CD4-positive, alpha-beta memory T cell (primary cell): ENCODE measurements at regions of chr13 and their contacts with region 1.

Region 1: GRCh38 chr13:39037880-39038568 is at the starts of genes NHLRC3 and PROSER1:
- DNase-seq: peak; percentile 84 to 88 (median 85)
- H3K4me3 ChIP-seq: peak within 1 kb of the TSS; percentile 72 to 99
- H3K4me3 Mint-ChIP-seq: peak within 1 kb of the TSS; percentile 88 to 100 (median 95)
- H3K27ac ChIP-seq: peak within 1 kb of the TSS; percentile 73
- H3K27ac Mint-ChIP-seq: peak within 1 kb of the TSS; percentile 90 to 99 (median 95)
- H3K4me1 ChIP-seq: peaks cover 62% of the 10 kb centered on the region
- H3K4me1 Mint-ChIP-seq: peaks cover 35 to 72% (median 58%) of the 10 kb centered on the region in 4 donors
- H3K27me3 ChIP-seq: no peaks in the 10 kb centered on the region
- H3K27me3 Mint-ChIP-seq: no peaks in the 10 kb centered on the region
- total RNA-seq, gene NHLRC3: 26.5 to 27.3 TPM
- total RNA-seq, gene PROSER1: 48.1 to 49.5 TPM

Region 2: GRCh38 chr13:37058910-37059847 is 1978.8 kb before region 1 on chr13 and contains the start of gene SUPT20H:
- CTCF ChIA-PET with region 1: no interaction called
- POLR2A ChIA-PET with region 1: no interaction called
- intact Hi-C with region 1: loop called (anchors 1 kb)
- DNase-seq: peak; percentile 89 to 92 (median 90)
- H3K4me3 ChIP-seq: peak within 1 kb of the TSS; percentile 72 to 77
- H3K4me3 Mint-ChIP-seq: peak within 1 kb of the TSS; percentile 91 to 97 (median 96)
- H3K27ac ChIP-seq: peak within 1 kb of the TSS; percentile 95
- H3K27ac Mint-ChIP-seq: peak within 1 kb of the TSS; percentile 98 to 99 (median 99)
- H3K4me1 ChIP-seq: peaks cover 23% of the 10 kb centered on the region
- H3K4me1 Mint-ChIP-seq: peaks cover 14 to 56% (median 29%) of the 10 kb centered on the region in 4 donors
- H3K27me3 ChIP-seq: no peaks in the 10 kb centered on the region
- H3K27me3 Mint-ChIP-seq: no peaks in the 10 kb centered on the region
- total RNA-seq, gene SUPT20H: 104 to 105 TPM

Region 3: GRCh38 chr13:38349390-38350113 is 688.5 kb before region 1 on chr13 and contains the start of gene UFM1:
- CTCF ChIA-PET with region 1: no interaction called
- POLR2A ChIA-PET with region 1: interaction called, 10 read pairs
- intact Hi-C with region 1: loop called (anchors 1 kb)
- DNase-seq: peak; percentile 90 to 94 (median 92)
- H3K4me3 ChIP-seq: peak within 1 kb of the TSS; percentile 75 to 87
- H3K4me3 Mint-ChIP-seq: peak within 1 kb of the TSS; percentile 95 to 99 (median 98)
- H3K27ac ChIP-seq: peak within 1 kb of the TSS; percentile 90
- H3K27ac Mint-ChIP-seq: peak within 1 kb of the TSS; percentile 97 to 99 (median 98)
- H3K4me1 ChIP-seq: peaks cover 31% of the 10 kb centered on the region
- H3K4me1 Mint-ChIP-seq: peaks cover 26 to 42% (median 35%) of the 10 kb centered on the region in 4 donors
- H3K27me3 ChIP-seq: no peaks in the 10 kb centered on the region
- H3K27me3 Mint-ChIP-seq: peaks cover 0 to 2% of the 10 kb centered on the region in 2 donors
- total RNA-seq, gene UFM1: 81.8 to 82.1 TPM

Region 4: GRCh38 chr13:39023790-39024189 is 14.2 kb before region 1 on chr13:
- CTCF ChIA-PET with region 1: interaction called, 3 read pairs
- POLR2A ChIA-PET with region 1: interaction called, 17 read pairs
- intact Hi-C with region 1: no loop called
- DNase-seq: no peak
- H3K4me3 ChIP-seq: no peak overlapping the region
- H3K4me3 Mint-ChIP-seq: no peak overlapping the region
- H3K27ac ChIP-seq: no peak overlapping the region
- H3K27ac Mint-ChIP-seq: no peak overlapping the region
- H3K4me1 ChIP-seq: no peaks in the 10 kb centered on the region
- H3K4me1 Mint-ChIP-seq: peaks cover 0 to 6% (median 2%) of the 10 kb centered on the region in 4 donors
- H3K27me3 ChIP-seq: no peaks in the 10 kb centered on the region
- H3K27me3 Mint-ChIP-seq: no peaks in the 10 kb centered on the region

Region 5: DNA sequence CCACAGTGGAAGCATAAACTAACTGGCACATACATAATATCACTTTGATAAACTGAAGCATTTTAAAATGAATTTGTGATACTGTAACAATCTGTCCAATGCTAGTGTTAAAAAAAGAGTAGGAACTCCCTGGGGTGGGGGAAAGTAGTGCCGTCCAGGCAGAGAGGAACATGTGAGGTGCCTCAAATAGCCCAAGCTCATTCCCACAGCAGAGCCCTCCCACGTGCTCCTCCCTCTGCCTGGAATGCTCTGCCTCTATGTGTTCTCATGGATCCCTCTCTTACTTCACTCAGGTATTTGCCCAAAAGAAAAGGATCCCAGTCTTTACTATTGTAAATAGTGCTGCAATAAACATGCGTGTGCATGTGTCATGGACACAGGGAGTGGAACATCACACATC is 188.3 kb after region 1 on chr13:
- CTCF ChIA-PET with region 1: no interaction called
- POLR2A ChIA-PET with region 1: no interaction called
- intact Hi-C with region 1: no loop called
- DNase-seq: no peak
- H3K4me3 ChIP-seq: no peak overlapping the region
- H3K4me3 Mint-ChIP-seq: no peak overlapping the region
- H3K27ac ChIP-seq: no peak overlapping the region
- H3K27ac Mint-ChIP-seq: no peak overlapping the region
- H3K4me1 ChIP-seq: no peaks in the 10 kb centered on the region
- H3K4me1 Mint-ChIP-seq: no peaks in the 10 kb centered on the region
- H3K27me3 ChIP-seq: no peaks in the 10 kb centered on the region
- H3K27me3 Mint-ChIP-seq: peaks cover 3% of the 10 kb centered on the region in 2 donors

Region 6: GRCh38 chr13:39655569-39656324 is 617.7 kb after region 1 on chr13 and contains the start of gene COG6:
- CTCF ChIA-PET with region 1: no interaction called
- POLR2A ChIA-PET with region 1: interaction called, 3 read pairs
- intact Hi-C with region 1: loop called (anchors 1 kb)
- DNase-seq: peak; percentile 89 to 95 (median 91)
- H3K4me3 ChIP-seq: peak within 1 kb of the TSS; percentile 77 to 94
- H3K4me3 Mint-ChIP-seq: peak within 1 kb of the TSS; percentile 92 to 99 (median 98)
- H3K27ac ChIP-seq: peak within 1 kb of the TSS; percentile 67
- H3K27ac Mint-ChIP-seq: peak within 1 kb of the TSS; percentile 82 to 98 (median 94)
- H3K4me1 ChIP-seq: peaks cover 17% of the 10 kb centered on the region
- H3K4me1 Mint-ChIP-seq: peaks cover 23 to 45% (median 35%) of the 10 kb centered on the region in 4 donors
- H3K27me3 ChIP-seq: no peaks in the 10 kb centered on the region
- H3K27me3 Mint-ChIP-seq: no peaks in the 10 kb centered on the region
- total RNA-seq, gene COG6: 37.2 to 44.5 TPM

Region 7: GRCh38 chr13:40770934-40771618 is 1733.1 kb after region 1 on chr13 and contains the start of gene MRPS31:
- CTCF ChIA-PET with region 1: no interaction called
- POLR2A ChIA-PET with region 1: no interaction called
- intact Hi-C with region 1: loop called (anchors 10 kb)
- DNase-seq: peak; percentile 91 to 92 (median 92)
- H3K4me3 ChIP-seq: peak within 1 kb of the TSS; percentile 53 to 97
- H3K4me3 Mint-ChIP-seq: peak within 1 kb of the TSS; percentile 97 to 100 (median 99)
- H3K27ac ChIP-seq: peak within 1 kb of the TSS; percentile 79
- H3K27ac Mint-ChIP-seq: peak within 1 kb of the TSS in 6 of 7 donors; percentile 98 to 100 (median 99)
- H3K4me1 ChIP-seq: peaks cover 28% of the 10 kb centered on the region
- H3K4me1 Mint-ChIP-seq: peaks cover 8 to 33% (median 27%) of the 10 kb centered on the region in 4 donors
- H3K27me3 ChIP-seq: no peaks in the 10 kb centered on the region
- H3K27me3 Mint-ChIP-seq: no peaks in the 10 kb centered on the region
- total RNA-seq, gene MRPS31: 37.7 to 39.5 TPM